CD4-positive, alpha-beta T cell (primary cell): ENCODE measurements at regions of chr7 and their contacts with region 1.

Region 1: GRCh38 chr7:23597094-23598091 is at the start of gene CCDC126:
- DNase-seq: peak; percentile 57 to 89 (median 76)
- ATAC-seq: peak; percentile 90
- H3K4me3 ChIP-seq: peak within 1 kb of the TSS; percentile 86
- H3K4me3 Mint-ChIP-seq: peak within 1 kb of the TSS; percentile 95
- H3K27ac ChIP-seq: peak within 1 kb of the TSS in 1 of 2 donors; percentile 75
- H3K27ac Mint-ChIP-seq: peak within 1 kb of the TSS; percentile 80
- H3K4me1 ChIP-seq: peaks cover 17% of the 10 kb centered on the region
- H3K4me1 Mint-ChIP-seq: peaks cover 32% of the 10 kb centered on the region
- H3K27me3 ChIP-seq: no peaks in the 10 kb centered on the region
- H3K27me3 Mint-ChIP-seq: no peaks in the 10 kb centered on the region
- CTCF ChIP-seq: no peak
- total RNA-seq, gene CCDC126: 8.3 to 10.3 TPM

Region 2: DNA sequence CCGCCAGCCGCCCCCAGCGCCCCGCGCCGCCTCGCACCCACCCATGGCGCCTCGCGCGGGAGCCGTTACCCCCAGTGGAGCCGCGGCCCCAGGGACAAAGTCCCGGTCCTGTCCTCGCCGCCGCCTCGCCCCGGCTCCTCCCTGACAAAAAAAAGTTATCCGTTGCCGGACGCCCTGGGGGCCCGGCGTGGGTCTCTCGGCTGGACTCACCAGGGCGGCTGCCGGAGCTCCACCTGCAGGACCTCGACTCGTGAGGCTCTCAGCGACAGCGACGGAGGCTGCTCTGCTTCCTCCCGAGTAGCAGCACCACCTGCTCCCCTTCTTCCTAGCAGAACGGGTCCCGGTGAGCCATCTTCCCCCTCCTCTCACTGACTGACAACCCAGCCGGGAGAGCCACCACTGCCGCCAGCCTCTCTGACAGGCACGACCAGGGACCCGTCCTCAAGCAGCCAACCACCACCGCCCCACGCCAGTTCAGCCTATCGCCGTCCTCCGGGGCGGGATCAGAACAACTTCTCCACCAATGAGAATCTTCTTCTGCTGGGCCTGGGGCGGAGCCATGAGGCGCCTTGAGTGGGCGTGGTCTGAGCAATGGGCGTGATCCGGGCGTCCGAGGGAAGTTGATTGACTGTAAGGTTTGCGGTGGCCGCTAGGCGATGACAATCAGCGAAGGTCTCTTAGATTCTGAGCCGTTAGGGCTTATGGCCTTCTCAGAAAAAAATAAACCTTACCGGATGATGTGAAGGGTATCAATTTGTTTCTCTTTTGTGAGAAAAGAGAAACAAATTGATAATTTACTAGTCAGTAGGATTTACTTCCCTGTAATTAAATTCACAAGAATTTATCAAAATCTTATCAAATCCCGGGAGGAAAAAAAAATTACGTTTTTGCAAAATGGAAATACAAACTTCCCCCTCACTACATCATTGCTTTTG is 583.4 kb before region 1 on chr7 and contains the start of gene HYCC1:
- CTCF ChIA-PET with region 1: no interaction called
- POLR2A ChIA-PET with region 1: no interaction called
- intact Hi-C with region 1: loop called in 1 of 2 experiments (anchors 10 kb)
- DNase-seq: peak; percentile 97 to 99 (median 98)
- ATAC-seq: peak; percentile 96
- H3K4me3 ChIP-seq: peak within 1 kb of the TSS; percentile 87
- H3K4me3 Mint-ChIP-seq: peak within 1 kb of the TSS; percentile 99
- H3K27ac ChIP-seq: peak within 1 kb of the TSS; percentile 31 to 44
- H3K27ac Mint-ChIP-seq: peak within 1 kb of the TSS; percentile 83
- H3K4me1 ChIP-seq: peaks cover 19% of the 10 kb centered on the region
- H3K4me1 Mint-ChIP-seq: peaks cover 24% of the 10 kb centered on the region
- H3K27me3 ChIP-seq: no peaks in the 10 kb centered on the region
- H3K27me3 Mint-ChIP-seq: no peaks in the 10 kb centered on the region
- CTCF ChIP-seq: peak; percentile 65
- total RNA-seq, gene HYCC1: 12.4 to 13.1 TPM

Region 3: DNA sequence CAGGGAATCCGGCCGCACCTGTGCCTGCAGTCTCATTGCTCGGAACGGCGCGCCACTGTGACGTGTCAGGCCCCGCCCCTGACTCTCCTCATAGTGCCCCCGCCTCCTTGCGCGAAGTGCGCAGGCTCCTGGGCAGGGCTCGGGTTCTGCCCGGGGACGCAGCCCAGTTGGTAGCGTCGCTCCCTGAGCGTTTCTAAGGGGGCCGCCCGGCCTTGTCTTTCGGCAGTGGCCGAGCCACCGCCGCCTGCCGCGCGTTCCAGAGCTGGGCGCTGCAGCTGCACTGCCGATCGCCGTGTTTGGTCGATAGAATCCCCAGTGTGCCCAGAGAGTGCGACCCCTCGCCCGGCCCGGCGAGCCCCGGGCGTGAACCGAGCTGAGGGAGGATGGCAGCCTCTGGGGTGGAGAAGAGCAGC is 491.7 kb before region 1 on chr7 and contains the start of gene KLHL7:
- CTCF ChIA-PET with region 1: no interaction called
- POLR2A ChIA-PET with region 1: interaction called, 4 read pairs
- intact Hi-C with region 1: loop called in 1 of 2 experiments (anchors 10 kb)
- DNase-seq: peak; percentile 89 to 98 (median 96)
- ATAC-seq: peak; percentile 94
- H3K4me3 ChIP-seq: peak within 1 kb of the TSS; percentile 98
- H3K4me3 Mint-ChIP-seq: peak within 1 kb of the TSS; percentile 98
- H3K27ac ChIP-seq: peak within 1 kb of the TSS; percentile 94
- H3K27ac Mint-ChIP-seq: peak within 1 kb of the TSS; percentile 96
- H3K4me1 ChIP-seq: peaks cover 19% of the 10 kb centered on the region
- H3K4me1 Mint-ChIP-seq: peaks cover 52% of the 10 kb centered on the region
- H3K27me3 ChIP-seq: no peaks in the 10 kb centered on the region
- H3K27me3 Mint-ChIP-seq: no peaks in the 10 kb centered on the region
- CTCF ChIP-seq: no peak
- total RNA-seq, gene KLHL7: 14.3 to 19.6 TPM

Region 4: GRCh38 chr7:23531794-23532489 is 65.5 kb before region 1 on chr7 and contains the start of gene TRA2A:
- CTCF ChIA-PET with region 1: no interaction called
- POLR2A ChIA-PET with region 1: interaction called, 3 read pairs
- intact Hi-C with region 1: loop called in 1 of 2 experiments (anchors 5 kb)
- DNase-seq: peak; percentile 92 to 99 (median 97)
- ATAC-seq: peak; percentile 91
- H3K4me3 ChIP-seq: peak within 1 kb of the TSS; percentile 97
- H3K4me3 Mint-ChIP-seq: peak within 1 kb of the TSS; percentile 94
- H3K27ac ChIP-seq: peak within 1 kb of the TSS; percentile 95 to 98
- H3K27ac Mint-ChIP-seq: peak within 1 kb of the TSS; percentile 97
- H3K4me1 ChIP-seq: peaks cover 29% of the 10 kb centered on the region
- H3K4me1 Mint-ChIP-seq: peaks cover 49% of the 10 kb centered on the region
- H3K27me3 ChIP-seq: no peaks in the 10 kb centered on the region
- H3K27me3 Mint-ChIP-seq: no peaks in the 10 kb centered on the region
- CTCF ChIP-seq: no peak
- total RNA-seq, gene TRA2A: 246 to 275 TPM

Region 5: DNA sequence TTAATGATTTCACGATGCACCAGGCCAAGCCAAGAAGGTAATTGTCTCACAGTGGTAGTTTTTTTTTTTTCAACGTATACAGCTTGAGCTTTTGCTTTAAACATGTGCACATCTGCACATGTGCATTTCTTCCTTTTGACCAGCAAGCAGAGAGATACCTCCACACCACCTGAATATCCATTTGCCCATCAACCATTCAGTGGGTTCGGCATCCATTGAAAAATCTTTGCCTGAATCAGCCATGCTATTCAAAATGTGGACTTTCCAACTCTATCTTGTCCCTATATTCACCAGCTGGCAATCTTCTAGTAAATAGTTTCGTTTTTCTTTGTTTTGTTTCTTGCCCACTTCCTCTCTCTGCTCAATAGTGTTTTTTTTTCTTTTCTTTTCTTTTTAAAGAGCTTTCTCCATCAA is 57.9 kb before region 1 on chr7:
- CTCF ChIA-PET with region 1: no interaction called
- POLR2A ChIA-PET with region 1: interaction called, 13 read pairs
- intact Hi-C with region 1: loop called in 1 of 2 experiments (anchors 5 kb)
- DNase-seq: peak in 1 of 14 experiments; percentile 68
- ATAC-seq: peak; percentile 71
- H3K4me3 ChIP-seq: peak overlapping the region; percentile 26
- H3K4me3 Mint-ChIP-seq: peak overlapping the region; percentile 54
- H3K27ac ChIP-seq: peak overlapping the region; percentile 35 to 63
- H3K27ac Mint-ChIP-seq: peak overlapping the region; percentile 63
- H3K4me1 ChIP-seq: peaks cover 16% of the 10 kb centered on the region
- H3K4me1 Mint-ChIP-seq: peaks cover 17% of the 10 kb centered on the region
- H3K27me3 ChIP-seq: no peaks in the 10 kb centered on the region
- H3K27me3 Mint-ChIP-seq: no peaks in the 10 kb centered on the region
- CTCF ChIP-seq: no peak

Region 6: GRCh38 chr7:23662124-23662983 is 65.0 kb after region 1 on chr7:
- CTCF ChIA-PET with region 1: no interaction called
- POLR2A ChIA-PET with region 1: no interaction called
- intact Hi-C with region 1: no loop called
- DNase-seq: no peak
- ATAC-seq: no peak
- H3K4me3 ChIP-seq: no peak overlapping the region
- H3K4me3 Mint-ChIP-seq: no peak overlapping the region
- H3K27ac ChIP-seq: no peak overlapping the region
- H3K27ac Mint-ChIP-seq: no peak overlapping the region
- H3K4me1 ChIP-seq: no peaks in the 10 kb centered on the region
- H3K4me1 Mint-ChIP-seq: no peaks in the 10 kb centered on the region
- H3K27me3 ChIP-seq: no peaks in the 10 kb centered on the region
- H3K27me3 Mint-ChIP-seq: no peaks in the 10 kb centered on the region
- CTCF ChIP-seq: no peak

Region 7: GRCh38 chr7:23679898-23680413 is 82.6 kb after region 1 on chr7 and contains the start of gene FAM221A:
- CTCF ChIA-PET with region 1: interaction called, 7 read pairs
- POLR2A ChIA-PET with region 1: interaction called, 5 read pairs
- intact Hi-C with region 1: loop called in 1 of 2 experiments (anchors 2 kb)
- DNase-seq: peak; percentile 60 to 91 (median 77)
- ATAC-seq: peak; percentile 95
- H3K4me3 ChIP-seq: peak within 1 kb of the TSS; percentile 81
- H3K4me3 Mint-ChIP-seq: peak within 1 kb of the TSS; percentile 95
- H3K27ac ChIP-seq: peak within 1 kb of the TSS; percentile 1 to 56
- H3K27ac Mint-ChIP-seq: peak within 1 kb of the TSS; percentile 85
- H3K4me1 ChIP-seq: peaks cover 12% of the 10 kb centered on the region
- H3K4me1 Mint-ChIP-seq: peaks cover 14% of the 10 kb centered on the region
- H3K27me3 ChIP-seq: no peaks in the 10 kb centered on the region
- H3K27me3 Mint-ChIP-seq: peaks cover 7% of the 10 kb centered on the region
- CTCF ChIP-seq: peak; percentile 82
- total RNA-seq, gene FAM221A: 1.8 to 2.8 TPM

Region 8: GRCh38 chr7:24038993-24039392 is 441.6 kb after region 1 on chr7:
- CTCF ChIA-PET with region 1: no interaction called
- POLR2A ChIA-PET with region 1: no interaction called
- intact Hi-C with region 1: no loop called
- DNase-seq: no peak
- ATAC-seq: no peak
- H3K4me3 ChIP-seq: no peak overlapping the region
- H3K4me3 Mint-ChIP-seq: no peak overlapping the region
- H3K27ac ChIP-seq: no peak overlapping the region
- H3K27ac Mint-ChIP-seq: no peak overlapping the region
- H3K4me1 ChIP-seq: no peaks in the 10 kb centered on the region
- H3K4me1 Mint-ChIP-seq: peaks cover 7% of the 10 kb centered on the region
- H3K27me3 ChIP-seq: peaks cover 0 to 5% of the 10 kb centered on the region in 2 experiments
- H3K27me3 Mint-ChIP-seq: no peaks in the 10 kb centered on the region
- CTCF ChIP-seq: no peak

Region 9: GRCh38 chr7:25179771-25180591 is 1582.6 kb after region 1 on chr7:
- CTCF ChIA-PET with region 1: no interaction called
- POLR2A ChIA-PET with region 1: no interaction called
- intact Hi-C with region 1: loop called in 1 of 2 experiments (anchors 5 kb)
- DNase-seq: peak; percentile 89 to 98 (median 95)
- ATAC-seq: peak; percentile 96
- H3K4me3 ChIP-seq: peak overlapping the region; percentile 77
- H3K4me3 Mint-ChIP-seq: peak overlapping the region; percentile 92
- H3K27ac ChIP-seq: peak overlapping the region; percentile 56 to 68
- H3K27ac Mint-ChIP-seq: peak overlapping the region; percentile 80
- H3K4me1 ChIP-seq: peaks cover 18% of the 10 kb centered on the region
- H3K4me1 Mint-ChIP-seq: peaks cover 24% of the 10 kb centered on the region
- H3K27me3 ChIP-seq: no peaks in the 10 kb centered on the region
- H3K27me3 Mint-ChIP-seq: no peaks in the 10 kb centered on the region
- CTCF ChIP-seq: peak; percentile 90